Right ventricle myocardium inferior (tissue), 1 donor: ENCODE measurements at regions of chr4 and their contacts with region 1.

Region 1: GRCh38 chr4:83012687-83013419 is 2.2 kb upstream of the LIN54 start:
- DNase-seq: peak; percentile 98
- ATAC-seq: peak; percentile 99

Region 2: GRCh38 chr4:82373816-82374625 is 638.8 kb before region 1 on chr4 and contains the start of gene HNRNPD:
- intact Hi-C with region 1: loop called (anchors 10 kb)
- DNase-seq: peak; percentile 98
- ATAC-seq: peak; percentile 98
- total RNA-seq, gene HNRNPD: 111 TPM

Region 3: GRCh38 chr4:82428969-82429727 is 583.7 kb before region 1 on chr4:
- intact Hi-C with region 1: loop called (anchors 5 kb)
- DNase-seq: peak; percentile 95
- ATAC-seq: peak; percentile 90

Region 4: GRCh38 chr4:82900331-82901128 is 112.3 kb before region 1 on chr4 and contains the start of gene THAP9:
- intact Hi-C with region 1: loop called (anchors 2 kb)
- DNase-seq: peak; percentile 99
- ATAC-seq: peak; percentile 98
- total RNA-seq, gene THAP9: 5.5 TPM

Region 5: GRCh38 chr4:82975792-82976191 is 37.1 kb before region 1 on chr4:
- intact Hi-C with region 1: no loop called
- DNase-seq: no peak
- ATAC-seq: no peak

Region 6: DNA sequence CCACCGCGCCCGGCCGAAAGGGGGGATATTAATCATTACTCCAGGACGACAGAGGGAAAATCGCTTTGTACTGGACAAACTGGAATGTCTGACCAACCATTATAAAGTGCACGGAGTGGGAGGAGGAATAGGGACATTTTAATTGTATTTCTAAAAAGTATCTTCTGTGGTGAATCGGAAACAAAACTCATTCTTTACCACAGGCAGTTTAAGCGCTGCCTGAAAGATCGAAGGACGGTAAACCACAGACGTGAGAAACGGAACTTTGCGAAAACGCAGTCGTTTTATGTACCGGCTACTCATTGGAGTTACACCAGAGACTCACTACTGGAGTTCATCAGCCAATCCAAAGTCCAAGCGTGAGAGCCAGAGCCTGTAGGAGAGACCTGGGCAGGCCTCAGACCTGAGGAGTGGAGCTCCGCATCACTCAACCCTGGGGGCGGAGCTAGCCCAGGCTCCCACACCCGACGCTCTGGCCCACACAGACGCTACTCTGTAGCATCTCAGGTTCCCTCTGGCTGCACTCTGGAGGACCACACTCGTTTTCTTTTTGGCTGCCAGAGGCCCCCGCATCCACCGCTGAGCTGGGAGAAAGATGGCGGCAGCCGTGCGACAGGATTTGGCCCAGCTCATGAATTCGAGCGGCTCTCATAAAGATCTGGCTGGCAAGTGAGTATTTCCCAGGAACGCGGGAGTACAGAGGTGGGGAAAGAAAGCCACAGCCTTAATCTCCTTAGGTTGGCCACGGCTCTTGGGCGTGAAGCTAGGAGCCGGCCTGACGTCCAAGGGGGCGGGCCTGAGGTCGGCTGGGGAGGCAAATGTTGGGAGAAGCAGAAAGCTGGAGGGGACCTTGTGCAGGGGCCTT is 22.0 kb after region 1 on chr4 and contains the start of gene COPS4:
- intact Hi-C with region 1: loop called (anchors 1 kb)
- DNase-seq: peak; percentile 97
- ATAC-seq: peak; percentile 100
- total RNA-seq, gene COPS4: 50.4 TPM

Region 7: DNA sequence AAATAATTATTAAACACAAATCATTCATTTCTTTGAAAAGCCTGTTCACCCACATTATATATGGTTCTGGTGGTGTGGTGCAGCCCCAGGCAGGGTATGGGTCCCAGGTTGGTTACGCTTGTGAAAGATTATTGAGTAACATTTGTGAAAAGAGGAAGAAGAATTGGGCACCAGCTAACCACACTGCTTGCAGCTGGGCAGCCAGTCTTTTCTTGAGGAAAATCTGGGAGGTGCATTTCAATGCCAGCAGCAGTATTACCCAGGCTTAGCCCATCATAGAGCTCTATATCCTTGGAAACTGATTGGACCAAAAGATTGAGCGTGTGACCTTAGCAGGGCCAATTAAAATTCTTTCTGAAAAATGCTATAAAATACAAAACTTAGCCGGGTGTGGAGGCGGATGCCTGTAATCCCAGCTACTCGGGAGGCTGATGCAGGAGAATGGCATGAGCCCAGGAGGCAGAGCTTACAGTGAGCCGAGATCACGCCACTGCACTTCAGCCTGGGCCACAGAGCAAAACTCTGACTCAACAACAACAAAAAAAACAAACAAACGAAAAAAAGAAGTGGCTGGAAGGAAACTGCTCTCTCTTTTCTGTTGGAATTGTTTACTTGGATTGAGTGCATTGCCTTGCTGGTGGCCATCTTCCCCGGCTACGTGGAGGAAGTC is 111.4 kb after region 1 on chr4:
- intact Hi-C with region 1: no loop called
- DNase-seq: no peak
- ATAC-seq: peak; percentile 46

Region 8: DNA sequence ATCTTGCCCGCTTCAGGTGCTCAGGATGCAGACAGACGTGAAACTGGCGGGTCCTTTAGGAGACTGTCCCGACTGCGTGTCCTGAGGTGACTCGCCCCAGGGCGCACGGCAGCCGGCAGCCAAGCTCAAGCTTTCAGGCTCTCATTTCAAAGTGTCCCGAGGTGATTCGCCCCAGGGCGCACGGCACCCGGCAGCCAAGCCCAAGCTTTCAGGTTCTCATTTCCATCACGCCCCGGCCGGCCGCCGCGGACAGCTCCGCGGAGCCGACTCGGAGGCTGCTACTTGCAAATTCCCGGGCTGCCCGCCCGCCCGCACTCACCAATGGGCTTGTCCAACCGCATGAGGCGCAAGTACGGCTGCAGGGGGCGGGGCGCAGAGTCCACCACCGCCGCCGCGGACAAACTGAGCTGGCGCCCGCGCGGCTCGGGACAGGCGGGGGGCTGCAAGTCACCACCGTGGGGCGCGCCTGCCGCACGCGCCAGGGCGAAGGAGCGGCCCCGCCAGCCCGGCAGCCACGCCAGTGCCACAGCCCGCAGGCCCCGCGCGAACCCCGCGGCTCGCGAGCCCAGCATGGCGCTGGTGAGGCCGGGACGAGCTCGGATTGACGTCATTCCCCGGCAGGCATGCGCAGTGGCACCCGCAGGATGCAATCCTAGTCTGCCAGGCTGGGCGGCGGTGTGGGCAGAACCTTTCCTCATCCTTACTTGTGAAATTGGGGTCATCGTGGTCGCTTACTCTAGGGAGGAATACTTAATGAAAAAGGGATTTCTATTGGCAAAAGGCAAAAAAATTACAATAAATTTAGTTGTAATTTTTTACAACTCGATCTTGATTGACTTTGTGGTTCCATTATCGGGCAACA is 271.6 kb after region 1 on chr4 and contains the start of gene COQ2:
- intact Hi-C with region 1: loop called (anchors 1 kb)
- DNase-seq: peak; percentile 98
- ATAC-seq: peak; percentile 97
- total RNA-seq, gene COQ2: 27.3 TPM